ENCODE measurements at regions of chr5 and their contacts with region 1.

Region 1: DNA sequence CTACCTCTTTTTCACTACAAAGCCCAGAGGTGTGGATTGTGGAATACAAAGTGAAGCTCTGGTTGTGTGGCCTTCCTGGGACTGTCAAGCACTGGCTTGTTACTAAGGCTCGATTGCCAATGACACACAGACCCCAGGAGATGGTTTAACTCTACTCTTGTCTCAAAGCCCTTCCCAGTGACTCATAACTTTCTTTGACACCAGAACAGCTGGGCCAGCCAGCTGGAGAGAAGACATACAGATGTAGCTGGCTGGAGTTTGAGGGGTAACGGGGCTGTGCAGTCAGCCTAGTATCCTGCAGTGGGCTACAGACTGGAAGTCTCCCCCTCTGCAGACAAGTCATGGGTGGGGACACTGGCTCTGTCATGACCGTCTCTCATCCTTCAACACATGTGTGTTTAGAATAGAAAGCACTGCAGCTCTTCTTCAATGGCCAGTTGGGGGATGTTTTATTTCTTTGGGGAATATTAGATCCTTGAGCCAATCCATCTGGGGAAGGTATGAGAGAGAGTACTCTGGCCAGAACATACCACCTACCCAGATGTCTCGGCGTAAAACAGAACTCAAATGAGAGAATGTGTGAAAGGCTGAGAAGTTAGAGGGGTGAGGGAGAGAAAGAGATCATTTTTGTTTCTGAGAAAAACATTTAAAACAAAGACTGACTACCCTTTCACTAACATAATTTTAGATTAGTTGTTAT is 53.3 kb downstream of the SEMA6A start:
- DNase-seq: no peak
- H3K4me3 ChIP-seq: no peak overlapping the region
- H3K27ac ChIP-seq: no peak overlapping the region
- H3K4me1 ChIP-seq: no peaks in the 10 kb centered on the region
- H3K27me3 ChIP-seq: no peaks in the 10 kb centered on the region
- CTCF ChIP-seq: no peak
- POLR2A ChIP-seq: no peak

Region 2: GRCh38 chr5:116023619-116024018 is 497.7 kb before region 1 on chr5:
- intact Hi-C with region 1: no loop called
- DNase-seq: no peak
- H3K4me3 ChIP-seq: no peak overlapping the region
- H3K27ac ChIP-seq: no peak overlapping the region
- H3K4me1 ChIP-seq: no peaks in the 10 kb centered on the region
- H3K27me3 ChIP-seq: no peaks in the 10 kb centered on the region
- CTCF ChIP-seq: no peak
- POLR2A ChIP-seq: no peak

Region 3: GRCh38 chr5:116343961-116344360 is 177.4 kb before region 1 on chr5:
- intact Hi-C with region 1: loop called (anchors 10 kb)
- DNase-seq: no peak
- H3K4me3 ChIP-seq: no peak overlapping the region
- H3K27ac ChIP-seq: no peak overlapping the region
- H3K4me1 ChIP-seq: no peaks in the 10 kb centered on the region
- H3K27me3 ChIP-seq: no peaks in the 10 kb centered on the region
- CTCF ChIP-seq: no peak
- POLR2A ChIP-seq: no peak

Measured in breast epithelium (tissue), 4 donors.